PC-9 (cell line): ENCODE measurements at regions of chr6 and their contacts with region 1.

Region 1: GRCh38 chr6:143427109-143427817 is 23.2 kb downstream of the ADAT2 start:
- DNase-seq: peak; percentile 80 to 86
- H3K4me3 ChIP-seq: no peak overlapping the region
- H3K27ac ChIP-seq: no peak overlapping the region
- H3K4me1 ChIP-seq: peaks cover 7% of the 10 kb centered on the region
- H3K27me3 ChIP-seq: no peaks in the 10 kb centered on the region
- CTCF ChIP-seq: peak; percentile 96

Region 2: DNA sequence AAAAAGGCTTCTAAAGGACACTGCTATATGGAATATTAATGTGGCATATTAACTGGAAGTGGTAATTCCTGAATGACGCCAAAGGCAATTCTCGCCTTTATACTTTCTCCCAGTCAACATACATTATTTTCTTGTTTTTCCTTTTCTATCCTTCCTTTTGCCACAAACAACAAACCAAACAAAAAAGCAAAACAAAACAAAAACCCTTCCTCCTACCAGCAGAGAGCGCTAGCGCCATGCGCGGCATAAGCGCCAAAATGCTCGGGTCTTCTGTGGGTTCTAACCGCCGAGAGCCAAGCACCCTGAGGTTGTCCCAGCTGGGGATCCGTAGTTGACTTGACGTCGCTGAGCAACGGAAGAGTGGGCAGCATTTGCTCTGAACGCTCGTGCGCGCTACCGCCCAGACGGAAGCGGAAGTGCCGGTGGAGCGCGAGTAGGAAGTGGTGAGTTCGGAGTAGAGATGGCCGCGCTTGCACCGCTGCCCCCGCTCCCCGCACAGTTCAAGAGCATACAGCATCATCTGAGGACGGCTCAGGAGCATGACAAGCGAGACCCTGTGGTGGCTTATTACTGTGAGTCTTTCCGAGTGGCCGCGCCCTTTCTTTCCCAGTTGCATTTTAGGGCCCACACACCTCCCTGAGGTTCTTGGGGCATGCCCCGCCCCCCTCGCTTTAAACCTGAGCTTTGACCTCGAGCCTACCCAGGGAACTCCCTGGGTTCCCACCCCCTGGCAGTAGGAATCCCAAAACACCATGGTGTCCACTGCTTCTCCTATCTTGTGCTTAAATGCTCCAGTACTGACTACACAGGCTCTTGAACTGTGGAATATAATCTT is 1280.2 kb before region 1 on chr6 and contains the starts of genes NMBR and VTA1:
- CTCF ChIA-PET with region 1: no interaction called
- POLR2A ChIA-PET with region 1: no interaction called
- intact Hi-C with region 1: loop called (anchors 2 kb)
- DNase-seq: peak; percentile 95
- H3K4me3 ChIP-seq: peak within 1 kb of the TSS; percentile 92
- H3K27ac ChIP-seq: peak within 1 kb of the TSS; percentile 25; the same call in 1 of the 2 replicates
- H3K4me1 ChIP-seq: peaks cover 19% of the 10 kb centered on the region; the same call in 1 of the 2 replicates
- H3K27me3 ChIP-seq: no peaks in the 10 kb centered on the region
- CTCF ChIP-seq: peak; percentile 84
- total RNA-seq, gene NMBR: 0.35 TPM in 1 of 2 replicates, not detected in the other
- total RNA-seq, gene VTA1: 29.5 and 52.0 TPM in 2 replicates

Region 3: DNA sequence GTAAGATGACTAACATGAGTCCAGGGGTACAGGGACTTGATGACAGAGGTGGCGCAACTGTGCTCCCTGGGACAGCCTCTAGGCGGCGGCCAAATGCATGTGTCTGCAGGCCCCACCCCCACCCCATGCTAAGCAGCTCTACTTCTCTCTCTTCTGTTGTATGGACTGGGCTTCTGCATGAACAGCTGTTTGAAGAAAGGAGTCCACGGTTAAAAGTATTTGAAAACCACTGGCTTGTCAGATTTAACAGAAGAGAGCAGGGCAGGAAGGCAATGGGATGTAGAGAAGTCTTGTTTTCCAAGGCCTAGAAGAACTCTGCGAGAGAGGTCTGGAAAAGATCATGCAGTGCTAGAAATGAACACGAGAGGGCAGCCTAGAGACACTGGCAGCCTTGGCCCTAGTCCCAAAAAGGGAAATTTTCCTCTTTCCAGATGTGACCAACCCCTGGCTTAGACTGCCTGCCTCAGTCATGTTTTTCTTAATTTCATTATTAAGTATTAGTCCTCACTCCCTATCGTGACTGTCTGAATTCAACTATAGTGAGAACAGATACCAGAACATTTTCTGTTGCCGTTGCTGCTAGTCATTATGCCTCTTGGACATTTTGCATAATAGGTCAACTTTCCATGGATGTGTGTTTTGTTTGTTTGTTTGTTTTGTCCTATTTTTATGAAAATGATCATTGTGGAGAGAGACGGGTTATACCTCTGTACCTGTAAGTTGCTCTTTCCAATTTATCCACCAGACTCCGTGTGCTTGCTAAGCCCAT is 860.5 kb before region 1 on chr6:
- CTCF ChIA-PET with region 1: no interaction called
- POLR2A ChIA-PET with region 1: no interaction called
- intact Hi-C with region 1: loop called (anchors 1 kb)
- DNase-seq: peak; percentile 44 to 56
- H3K4me3 ChIP-seq: no peak overlapping the region
- H3K27ac ChIP-seq: no peak overlapping the region
- H3K4me1 ChIP-seq: peaks cover 20% of the 10 kb centered on the region
- H3K27me3 ChIP-seq: no peaks in the 10 kb centered on the region
- CTCF ChIP-seq: peak; percentile 90

Region 4: DNA sequence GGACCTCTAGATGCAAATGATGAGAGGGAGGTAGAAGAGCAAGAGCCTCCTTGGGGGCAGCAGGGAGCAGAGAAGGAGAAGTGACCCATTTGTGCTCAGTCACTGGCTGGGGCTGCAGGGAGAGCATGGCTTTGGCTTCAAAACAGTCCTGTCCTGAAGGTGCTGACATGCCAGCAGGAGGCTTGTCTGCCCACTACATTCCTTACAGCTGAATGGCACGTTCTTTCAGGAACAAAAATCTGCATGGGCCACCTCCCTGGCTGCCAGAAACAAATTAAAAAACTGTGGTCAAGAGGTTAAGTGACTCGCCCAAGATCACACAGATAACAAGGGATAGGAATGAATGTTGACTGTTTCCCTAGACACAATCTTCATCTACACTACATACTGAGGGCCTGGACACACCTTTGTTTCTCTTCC is 671.0 kb before region 1 on chr6:
- CTCF ChIA-PET with region 1: no interaction called
- POLR2A ChIA-PET with region 1: no interaction called
- intact Hi-C with region 1: loop called (anchors 10 kb)
- DNase-seq: peak; percentile 86 to 97
- H3K4me3 ChIP-seq: no peak overlapping the region
- H3K27ac ChIP-seq: peak overlapping the region; percentile 54
- H3K4me1 ChIP-seq: peaks cover 22% of the 10 kb centered on the region
- H3K27me3 ChIP-seq: no peaks in the 10 kb centered on the region
- CTCF ChIP-seq: 0 out of 2 replicates have a peak, but pooled peaks have one; percentile 22

Region 5: DNA sequence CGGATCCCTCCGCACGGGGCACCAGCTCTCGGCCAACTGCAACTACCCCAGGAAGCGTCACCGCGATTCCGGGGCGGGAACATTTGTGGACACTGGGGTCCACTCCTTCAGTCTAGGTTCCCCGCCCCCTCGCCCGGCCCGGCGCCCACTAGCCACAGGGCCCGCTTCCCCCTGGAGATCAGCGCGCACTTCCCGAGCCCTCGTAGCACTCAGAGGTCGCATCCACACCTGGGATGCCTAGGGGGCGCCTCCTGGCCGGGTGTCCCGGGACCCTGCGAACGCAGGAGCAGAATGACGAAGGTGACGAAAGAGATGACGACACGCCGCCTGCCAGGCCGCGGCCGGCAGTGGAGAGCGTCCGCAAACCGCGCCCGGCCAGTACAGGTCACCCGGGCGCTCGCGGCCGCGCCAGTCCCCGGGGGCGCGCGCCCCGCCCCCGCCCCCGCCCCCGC is 366.9 kb before region 1 on chr6:
- CTCF ChIA-PET with region 1: no interaction called
- POLR2A ChIA-PET with region 1: no interaction called
- intact Hi-C with region 1: loop called (anchors 1 kb)
- DNase-seq: peak; percentile 75 to 84
- H3K4me3 ChIP-seq: peak overlapping the region; percentile 66
- H3K27ac ChIP-seq: peak overlapping the region; percentile 97
- H3K4me1 ChIP-seq: peaks cover 51% of the 10 kb centered on the region
- H3K27me3 ChIP-seq: no peaks in the 10 kb centered on the region
- CTCF ChIP-seq: no peak; the same call in 1 of the 2 replicates

Region 6: DNA sequence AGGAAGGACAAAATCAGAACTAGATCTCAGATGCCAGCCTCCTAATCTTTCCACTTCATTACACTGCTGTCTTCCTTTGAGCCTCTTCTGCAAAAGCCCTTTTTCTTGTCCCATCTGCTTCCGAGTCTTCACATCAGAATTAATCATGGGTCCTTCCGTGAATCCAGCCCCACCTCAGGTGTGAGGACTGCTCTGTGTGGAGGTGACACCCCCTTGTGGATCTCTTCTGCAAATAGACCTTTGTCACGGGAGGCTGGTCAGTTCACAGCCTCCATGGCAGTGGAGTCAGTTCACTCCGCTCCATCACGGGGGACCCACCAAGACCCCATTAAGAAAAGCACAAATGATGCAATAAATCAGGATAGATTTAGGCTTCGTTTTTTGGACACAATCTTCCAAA is 147.9 kb before region 1 on chr6:
- CTCF ChIA-PET with region 1: no interaction called
- POLR2A ChIA-PET with region 1: no interaction called
- intact Hi-C with region 1: loop called (anchors 5 kb)
- DNase-seq: peak in 1 of 2 experiments; percentile 10
- H3K4me3 ChIP-seq: no peak overlapping the region
- H3K27ac ChIP-seq: no peak overlapping the region
- H3K4me1 ChIP-seq: no peaks in the 10 kb centered on the region
- H3K27me3 ChIP-seq: no peaks in the 10 kb centered on the region
- CTCF ChIP-seq: 0 out of 2 replicates have a peak, but pooled peaks have one; percentile 32

Region 7: DNA sequence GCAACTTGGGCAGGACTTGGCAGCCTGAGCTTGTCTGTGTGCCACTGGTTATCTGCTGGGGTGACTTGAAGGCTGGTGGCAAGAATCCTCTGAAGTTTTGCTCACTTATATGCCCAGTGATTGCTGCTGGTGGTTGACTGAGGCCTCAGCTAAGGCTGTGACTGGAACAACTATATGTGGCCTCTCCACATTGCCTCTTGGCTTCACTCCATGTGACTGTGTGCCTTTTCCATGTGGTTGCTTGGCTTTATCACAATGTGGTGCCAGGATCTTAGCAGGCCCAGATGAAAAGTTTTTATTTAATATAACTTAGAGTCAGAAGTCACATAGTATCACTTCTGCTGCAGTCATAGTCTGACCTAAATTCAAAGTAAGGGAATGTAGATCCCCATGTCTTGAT is 81.3 kb before region 1 on chr6:
- CTCF ChIA-PET with region 1: no interaction called
- POLR2A ChIA-PET with region 1: no interaction called
- intact Hi-C with region 1: no loop called
- DNase-seq: no peak
- H3K4me3 ChIP-seq: no peak overlapping the region
- H3K27ac ChIP-seq: no peak overlapping the region
- H3K4me1 ChIP-seq: no peaks in the 10 kb centered on the region
- H3K27me3 ChIP-seq: no peaks in the 10 kb centered on the region
- CTCF ChIP-seq: no peak

Region 8: DNA sequence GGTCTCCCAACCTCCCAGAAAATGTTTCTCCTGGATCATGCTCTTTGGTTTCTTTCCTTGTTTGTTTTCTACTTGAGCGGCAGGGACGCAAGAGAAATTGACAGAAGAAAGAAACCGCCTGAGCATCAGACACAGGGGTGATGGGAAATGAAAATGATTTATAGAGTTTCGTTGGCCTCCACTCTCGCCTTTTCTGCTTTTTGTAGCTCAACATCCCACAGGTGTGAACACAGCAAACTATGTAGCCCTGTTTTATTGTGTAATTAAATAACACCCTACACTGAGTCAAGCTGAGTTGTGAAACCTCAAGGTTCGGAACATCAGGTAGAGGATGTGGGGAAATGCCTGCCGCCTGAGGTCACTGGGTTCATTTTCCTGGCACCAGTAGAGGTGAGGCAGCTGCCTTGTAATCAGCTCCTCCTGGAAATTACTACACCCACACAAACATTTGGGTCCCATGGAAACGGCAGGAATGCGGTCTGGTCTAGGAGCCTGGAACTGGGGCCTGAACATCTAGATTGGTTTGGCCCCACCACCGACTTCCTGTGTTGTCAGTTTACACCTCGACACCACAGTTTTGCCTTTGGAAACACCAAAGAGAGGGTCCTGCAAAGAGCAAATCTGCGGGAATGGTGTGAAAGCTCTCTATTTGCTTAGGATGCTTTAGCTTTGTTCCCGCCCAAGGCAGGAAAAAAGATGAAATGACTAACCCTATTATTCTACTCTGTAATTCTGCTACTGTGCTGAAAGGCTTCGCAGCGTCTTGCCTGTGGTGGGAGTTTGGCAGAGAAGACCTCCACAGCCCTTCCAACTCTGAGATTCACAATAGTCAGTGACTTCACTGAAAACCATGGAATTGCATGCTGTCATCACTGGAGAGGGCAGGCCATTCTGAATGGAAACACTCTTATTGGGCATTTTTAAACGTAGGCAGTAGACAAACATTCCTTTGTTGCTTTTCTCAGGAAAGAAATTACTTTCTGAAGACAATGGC is 29.7 kb before region 1 on chr6:
- CTCF ChIA-PET with region 1: no interaction called
- POLR2A ChIA-PET with region 1: interaction called, 3 read pairs
- intact Hi-C with region 1: loop called (anchors 2 kb)
- DNase-seq: peak; percentile 91 to 98
- H3K4me3 ChIP-seq: no peak overlapping the region
- H3K27ac ChIP-seq: peak overlapping the region; percentile 90
- H3K4me1 ChIP-seq: peaks cover 70% of the 10 kb centered on the region
- H3K27me3 ChIP-seq: no peaks in the 10 kb centered on the region
- CTCF ChIP-seq: no peak